ENCODE measurements at regions of chr12 and their contacts with region 1.

Region 1: GRCh38 chr12:104569346-104570173 is 112.8 kb downstream of the CHST11 start:
- DNase-seq: peak; percentile 87
- ATAC-seq: peak; percentile 83
- H3K4me3 Mint-ChIP-seq: peak overlapping the region; percentile 45
- H3K27ac Mint-ChIP-seq: peak overlapping the region; percentile 86
- H3K4me1 Mint-ChIP-seq: peaks cover 71% of the 10 kb centered on the region
- H3K27me3 Mint-ChIP-seq: no peaks in the 10 kb centered on the region

Region 2: GRCh38 chr12:104582739-104583138 is 13.2 kb after region 1 on chr12:
- CTCF ChIA-PET with region 1: interaction called, 18 read pairs
- POLR2A ChIA-PET with region 1: interaction called, 7 read pairs
- DNase-seq: no peak
- ATAC-seq: no peak
- H3K4me3 Mint-ChIP-seq: no peak overlapping the region
- H3K27ac Mint-ChIP-seq: no peak overlapping the region
- H3K4me1 Mint-ChIP-seq: peaks cover 60% of the 10 kb centered on the region
- H3K27me3 Mint-ChIP-seq: no peaks in the 10 kb centered on the region

Region 3: DNA sequence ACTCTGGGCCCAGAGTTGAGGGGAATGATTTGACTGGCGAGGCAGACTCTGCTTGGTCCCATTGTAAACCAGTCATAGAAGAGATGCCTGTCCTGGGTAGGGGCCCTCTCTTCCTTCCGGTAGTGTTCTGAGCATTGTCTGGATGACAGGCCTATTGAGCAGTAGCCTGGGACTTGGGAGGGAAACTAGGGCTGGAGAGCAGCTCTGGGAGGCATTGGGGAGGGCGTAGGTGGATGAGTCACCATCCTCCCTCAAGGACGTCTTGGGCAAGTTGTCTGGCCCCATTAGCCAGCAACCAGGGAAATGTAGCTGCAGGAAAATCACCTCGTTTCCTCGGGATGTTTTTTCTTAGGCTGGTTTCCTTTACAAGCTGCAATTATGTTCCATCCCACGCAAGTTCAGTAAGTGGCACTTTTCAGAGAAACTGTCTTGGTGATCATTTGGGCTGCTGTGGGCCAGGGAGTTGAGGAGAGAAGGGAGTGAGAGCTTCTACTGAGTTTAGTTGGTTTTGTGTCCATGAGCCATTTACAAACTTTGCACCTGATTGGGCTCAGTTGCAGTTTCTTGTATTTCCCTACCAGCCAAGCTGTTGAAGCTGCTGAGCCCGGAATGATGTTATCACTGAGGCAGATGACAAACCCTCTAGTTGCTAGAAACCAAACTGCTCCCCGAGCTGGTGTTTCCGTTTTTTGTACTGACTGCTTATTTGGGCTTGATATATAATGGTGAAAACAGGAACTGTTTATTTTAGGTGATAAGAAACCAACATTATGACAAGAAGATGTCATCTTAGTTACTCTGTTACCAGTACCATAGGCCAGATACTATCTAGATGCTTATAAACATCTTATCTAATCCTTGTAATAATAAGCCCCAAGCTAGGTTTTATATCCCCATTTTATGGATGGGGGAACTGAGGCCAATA is 34.8 kb after region 1 on chr12:
- CTCF ChIA-PET with region 1: interaction called, 8 read pairs
- POLR2A ChIA-PET with region 1: interaction called, 10 read pairs
- DNase-seq: peak; percentile 52
- ATAC-seq: peak; percentile 72
- H3K4me3 Mint-ChIP-seq: no peak overlapping the region
- H3K27ac Mint-ChIP-seq: peak overlapping the region; percentile 74
- H3K4me1 Mint-ChIP-seq: peaks cover 60% of the 10 kb centered on the region
- H3K27me3 Mint-ChIP-seq: no peaks in the 10 kb centered on the region

Measured in activated CD8-positive, alpha-beta T cell treated with anti-CD3 and anti-CD28 coated beads, Interleukin-2, amount 10 ng/mL, durations not matched to agents 7 days and 5 days (primary cell).